PC-3 (cell line): ENCODE measurements at regions of chr5 and their contacts with region 1.

Region 1: DNA sequence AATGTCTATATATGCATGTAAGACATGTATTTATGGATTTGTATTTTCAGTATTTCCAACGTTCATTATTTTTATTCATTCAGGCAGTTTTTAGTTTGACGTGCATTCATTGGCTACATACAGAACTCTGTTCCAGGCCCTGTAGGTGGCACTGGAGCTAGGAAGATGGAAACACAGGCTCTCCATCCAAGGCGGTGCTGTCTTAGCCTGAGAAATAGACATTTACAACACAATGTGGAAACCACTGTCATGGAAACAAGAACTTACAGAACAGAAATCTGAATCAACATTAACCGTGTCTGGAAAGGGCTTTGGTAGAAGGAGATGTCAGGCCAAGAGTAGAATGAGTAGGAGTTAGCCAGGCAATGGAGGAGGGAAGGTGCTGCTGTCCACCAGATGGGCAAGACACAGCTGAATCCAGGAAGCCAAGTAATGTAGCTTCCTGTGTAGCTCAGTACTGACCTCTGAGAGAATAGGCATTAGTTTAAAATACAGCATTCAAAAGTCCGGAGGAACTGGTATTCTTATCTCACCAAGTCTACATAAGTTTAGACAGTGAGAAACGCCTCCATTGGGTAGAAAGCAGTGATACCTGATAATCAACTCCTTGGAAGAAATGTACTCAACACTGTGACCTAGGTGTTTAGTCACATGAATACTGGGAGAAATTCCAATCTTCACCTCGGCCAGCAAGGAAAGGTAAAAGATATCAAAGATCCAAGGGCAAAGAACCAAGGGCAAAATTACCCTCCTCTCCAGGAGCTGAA is 388.6 kb upstream of the CDH6 start:
- DNase-seq: peak; percentile 3
- ATAC-seq: no peak; the same call in 1 of the 2 replicates
- H3K4me3 ChIP-seq: no peak overlapping the region
- H3K27ac ChIP-seq: no peak overlapping the region
- H3K4me1 ChIP-seq: no peaks in the 10 kb centered on the region
- H3K27me3 ChIP-seq: peaks cover 19% of the 10 kb centered on the region; the same call in 1 of the 2 replicates
- CTCF ChIP-seq: peak; percentile 38; the same call in 1 of the 2 replicates

Region 2: DNA sequence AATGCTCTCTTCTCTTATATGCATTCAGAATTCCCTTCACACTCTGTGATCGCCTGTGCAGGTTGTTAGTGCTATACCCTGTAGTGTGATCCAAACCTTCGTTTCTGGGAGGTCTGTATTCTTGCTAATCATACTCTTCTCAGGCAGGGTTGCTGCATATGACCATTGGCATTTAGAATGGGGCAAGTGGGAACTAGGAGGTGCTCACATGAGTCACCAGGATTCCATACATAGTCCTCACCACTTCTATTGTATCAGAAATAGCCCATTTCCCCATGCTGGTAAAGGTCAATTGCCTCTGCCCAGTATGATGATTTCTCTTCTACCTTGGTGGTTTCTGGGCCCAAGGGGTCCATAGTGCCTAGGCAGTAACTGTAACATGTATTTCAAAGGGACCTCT is 55.0 kb before region 1 on chr5:
- CTCF ChIA-PET with region 1: no interaction called
- POLR2A ChIA-PET with region 1: no interaction called
- intact Hi-C with region 1: no loop called
- DNase-seq: peak; percentile 16
- ATAC-seq: no peak
- H3K4me3 ChIP-seq: no peak overlapping the region
- H3K27ac ChIP-seq: no peak overlapping the region
- H3K4me1 ChIP-seq: no peaks in the 10 kb centered on the region
- H3K27me3 ChIP-seq: 0 out of 2 replicates have a peak, but pooled peaks cover 6% of the 10 kb centered on the region
- CTCF ChIP-seq: no peak

Region 3: DNA sequence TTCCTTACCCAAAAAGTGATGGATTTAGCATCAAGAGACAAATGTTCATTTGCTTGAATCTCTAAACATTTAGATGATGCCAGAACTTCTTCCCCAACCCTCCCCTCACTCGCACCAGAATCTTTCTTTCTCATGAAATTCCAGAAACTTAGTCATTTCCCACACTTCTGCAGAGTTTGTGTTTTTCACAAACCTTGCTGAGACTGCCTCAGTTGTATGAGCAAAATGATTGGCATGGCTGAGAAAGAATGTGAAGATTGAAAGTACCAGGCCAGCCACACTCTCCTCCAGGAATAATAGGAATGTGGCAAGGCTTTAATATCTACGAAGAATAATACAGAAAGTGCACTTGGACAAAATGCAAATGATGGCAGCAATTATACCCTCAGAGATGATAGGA is 39.7 kb before region 1 on chr5:
- CTCF ChIA-PET with region 1: no interaction called
- POLR2A ChIA-PET with region 1: no interaction called
- intact Hi-C with region 1: no loop called
- DNase-seq: peak; percentile 41
- ATAC-seq: no peak
- H3K4me3 ChIP-seq: no peak overlapping the region
- H3K27ac ChIP-seq: no peak overlapping the region
- H3K4me1 ChIP-seq: no peaks in the 10 kb centered on the region
- H3K27me3 ChIP-seq: no peaks in the 10 kb centered on the region
- CTCF ChIP-seq: no peak

Region 4: DNA sequence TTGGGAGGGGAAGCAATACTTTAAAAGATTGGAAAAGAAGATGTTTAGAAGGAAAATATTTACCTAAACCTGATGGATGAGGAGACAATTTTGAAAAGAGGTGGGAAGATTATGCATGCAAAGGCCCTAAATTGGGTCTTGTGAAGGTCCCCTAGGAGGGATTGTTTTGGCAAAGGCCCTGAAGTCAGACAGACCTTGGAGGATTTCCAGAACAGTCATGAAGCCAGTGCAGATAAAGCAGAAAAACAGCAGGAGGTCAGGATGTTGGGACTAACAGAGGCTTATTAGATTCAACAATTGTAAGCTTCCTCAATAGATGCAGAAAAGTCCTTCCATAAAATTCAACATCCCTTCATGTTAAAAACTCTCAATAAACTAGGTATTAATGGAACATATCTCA is 27.6 kb after region 1 on chr5:
- CTCF ChIA-PET with region 1: no interaction called
- POLR2A ChIA-PET with region 1: no interaction called
- intact Hi-C with region 1: no loop called
- DNase-seq: no peak
- ATAC-seq: no peak
- H3K4me3 ChIP-seq: no peak overlapping the region
- H3K27ac ChIP-seq: no peak overlapping the region
- H3K4me1 ChIP-seq: no peaks in the 10 kb centered on the region
- H3K27me3 ChIP-seq: peaks cover 17% of the 10 kb centered on the region
- CTCF ChIP-seq: no peak

Region 5: GRCh38 chr5:31186672-31187267 is 381.8 kb after region 1 on chr5:
- CTCF ChIA-PET with region 1: no interaction called
- POLR2A ChIA-PET with region 1: no interaction called
- intact Hi-C with region 1: loop called (anchors 10 kb)
- DNase-seq: peak; percentile 59
- ATAC-seq: no peak
- H3K4me3 ChIP-seq: no peak overlapping the region
- H3K27ac ChIP-seq: no peak overlapping the region
- H3K4me1 ChIP-seq: no peaks in the 10 kb centered on the region
- H3K27me3 ChIP-seq: peaks cover 17% of the 10 kb centered on the region
- CTCF ChIP-seq: peak; percentile 86